ENCODE measurements at regions of chr7 and their contacts with region 1.

Region 1: DNA sequence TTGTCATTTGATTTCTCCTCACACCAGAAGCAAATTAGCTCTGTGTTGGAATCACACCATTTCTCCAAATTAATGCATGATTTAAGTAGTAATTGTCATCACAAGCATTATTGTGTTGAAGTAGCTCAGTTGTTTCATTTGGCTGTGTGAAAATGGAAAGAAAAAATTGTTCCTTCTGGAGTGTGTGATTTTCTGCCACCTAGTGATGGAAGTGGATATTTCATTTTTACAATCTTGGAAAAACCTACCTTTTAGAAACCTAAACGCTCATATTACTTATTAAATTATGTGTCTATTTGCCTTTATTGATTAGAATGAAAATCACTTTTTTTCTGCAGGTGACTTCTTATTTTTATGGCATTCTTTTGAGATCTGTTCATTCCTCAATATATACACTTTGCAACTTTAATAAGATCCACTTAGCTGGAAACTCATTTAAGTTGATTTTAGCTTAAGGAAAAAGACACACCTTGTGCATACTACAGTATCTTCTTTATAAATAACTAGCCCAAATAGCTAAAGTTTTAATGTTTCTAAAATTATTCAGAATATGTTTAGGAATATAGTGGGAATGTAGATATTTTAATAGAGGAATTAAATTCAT is 50.0 kb downstream of the SRI start:
- DNase-seq: no peak
- ATAC-seq: no peak
- H3K4me3 Mint-ChIP-seq: no peak overlapping the region
- H3K27ac Mint-ChIP-seq: no peak overlapping the region
- H3K4me1 Mint-ChIP-seq: no peaks in the 10 kb centered on the region
- H3K27me3 Mint-ChIP-seq: no peaks in the 10 kb centered on the region

Region 2: GRCh38 chr7:87506246-87507180 is 663.3 kb before region 1 on chr7:
- CTCF ChIA-PET with region 1: interaction called, 4 read pairs
- POLR2A ChIA-PET with region 1: no interaction called
- intact Hi-C with region 1: loop called in 1 of 2 experiments (anchors 10 kb)
- DNase-seq: no peak
- ATAC-seq: no peak
- H3K4me3 Mint-ChIP-seq: no peak overlapping the region
- H3K27ac Mint-ChIP-seq: no peak overlapping the region
- H3K4me1 Mint-ChIP-seq: no peaks in the 10 kb centered on the region
- H3K27me3 Mint-ChIP-seq: no peaks in the 10 kb centered on the region

Region 3: GRCh38 chr7:87779806-87780205 is 390.0 kb before region 1 on chr7:
- CTCF ChIA-PET with region 1: no interaction called
- POLR2A ChIA-PET with region 1: no interaction called
- intact Hi-C with region 1: no loop called
- DNase-seq: no peak
- ATAC-seq: no peak
- H3K4me3 Mint-ChIP-seq: no peak overlapping the region
- H3K27ac Mint-ChIP-seq: no peak overlapping the region
- H3K4me1 Mint-ChIP-seq: no peaks in the 10 kb centered on the region
- H3K27me3 Mint-ChIP-seq: no peaks in the 10 kb centered on the region

Region 4: DNA sequence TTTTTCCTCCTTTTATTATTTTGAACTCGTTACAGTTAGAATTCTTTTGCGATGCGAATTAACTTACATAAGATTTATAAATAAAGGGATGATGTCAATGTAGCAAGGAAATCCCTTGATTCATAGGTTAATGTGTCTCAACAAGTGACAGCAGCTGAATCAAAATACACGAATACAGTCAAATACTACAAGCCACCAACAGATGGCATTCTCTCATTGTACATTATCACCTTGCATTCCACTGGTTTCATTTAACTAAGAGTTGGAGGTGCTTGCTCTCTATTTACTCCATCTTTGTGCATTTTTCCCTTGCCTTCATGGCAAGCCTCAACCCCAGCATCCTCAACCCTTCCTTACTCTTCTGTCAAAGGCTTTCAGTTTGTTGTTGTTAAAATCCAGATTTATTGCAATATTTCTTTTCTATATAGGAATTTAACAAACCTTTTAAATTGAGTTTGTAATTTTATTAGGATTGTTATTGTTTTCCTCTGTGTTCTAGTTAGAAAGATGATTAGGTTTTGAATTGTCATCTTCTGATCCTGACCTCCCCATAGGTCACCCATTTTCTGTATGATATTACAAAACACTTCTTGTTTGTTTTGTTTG is 371.9 kb before region 1 on chr7:
- CTCF ChIA-PET with region 1: interaction called, 5 read pairs
- POLR2A ChIA-PET with region 1: no interaction called
- intact Hi-C with region 1: loop called (anchors 2 kb)
- DNase-seq: no peak
- ATAC-seq: no peak
- H3K4me3 Mint-ChIP-seq: no peak overlapping the region
- H3K27ac Mint-ChIP-seq: no peak overlapping the region
- H3K4me1 Mint-ChIP-seq: no peaks in the 10 kb centered on the region
- H3K27me3 Mint-ChIP-seq: peaks cover 5% of the 10 kb centered on the region

Region 5: DNA sequence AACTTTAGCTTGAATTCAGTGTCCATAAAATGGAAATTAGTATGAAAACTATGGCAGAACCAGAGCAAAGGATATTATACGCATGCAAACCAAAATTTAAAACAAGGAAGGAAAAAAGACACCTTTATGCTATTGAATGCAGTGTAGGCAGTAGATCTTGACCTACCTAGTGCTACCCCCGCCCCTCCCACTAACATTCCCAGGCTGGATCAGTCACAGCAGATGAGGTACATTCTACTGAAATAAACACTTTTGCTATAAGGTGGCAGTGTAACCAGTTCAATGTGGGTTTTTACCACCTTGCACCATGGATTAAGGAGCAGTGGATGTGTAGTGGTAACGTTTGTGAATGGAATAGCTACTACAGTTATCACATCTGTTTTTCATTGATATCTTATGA is 22.1 kb after region 1 on chr7:
- CTCF ChIA-PET with region 1: no interaction called
- POLR2A ChIA-PET with region 1: no interaction called
- intact Hi-C with region 1: no loop called
- DNase-seq: no peak
- ATAC-seq: no peak
- H3K4me3 Mint-ChIP-seq: no peak overlapping the region
- H3K27ac Mint-ChIP-seq: no peak overlapping the region
- H3K4me1 Mint-ChIP-seq: no peaks in the 10 kb centered on the region
- H3K27me3 Mint-ChIP-seq: no peaks in the 10 kb centered on the region